ENCODE measurements at regions of chr1 and their contacts with region 1.

Region 1: DNA sequence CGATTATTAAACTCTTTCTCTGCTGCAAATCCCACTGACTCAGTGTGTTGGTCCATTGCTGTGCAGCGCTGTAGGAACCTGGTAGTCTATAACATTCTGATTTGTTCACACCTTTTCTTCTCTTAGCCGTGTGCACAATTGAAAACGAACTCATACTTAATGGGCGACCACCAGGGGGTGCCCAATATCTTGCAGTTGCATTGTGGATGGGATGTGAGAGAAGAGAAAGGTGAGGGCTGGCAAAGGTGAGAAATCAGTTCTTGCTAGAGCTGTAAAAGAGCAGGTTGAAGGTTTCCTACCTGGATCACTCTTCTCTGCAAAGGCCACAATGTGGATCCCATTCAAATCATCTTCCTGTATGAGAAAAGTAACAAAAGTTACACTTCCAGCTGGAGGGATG is 51.0 kb downstream of the CASQ2 start:
- DNase-seq: peak in 3 of 4 experiments; percentile 29 to 62 (median 29)
- ATAC-seq: peak; percentile 74
- H3K4me3 ChIP-seq: no peak overlapping the region
- H3K27ac ChIP-seq: no peak overlapping the region
- H3K4me1 ChIP-seq: no peaks in the 10 kb centered on the region
- H3K27me3 ChIP-seq: peaks cover 32 to 39% of the 10 kb centered on the region in 2 experiments
- CTCF ChIP-seq: peak; percentile 59; a peak in 5 of 6 replicates
- EP300 ChIP-seq: no peak
- POLR2A ChIP-seq: no peak
- RAD21 ChIP-seq: peak; percentile 45 to 73

Region 2: GRCh38 chr1:115764541-115764940 is 47.0 kb after region 1 on chr1:
- CTCF ChIA-PET with region 1: no interaction called
- POLR2A ChIA-PET with region 1: no interaction called
- in situ Hi-C with region 1: no loop called
- intact Hi-C with region 1: loop called (anchors 2 kb)
- DNase-seq: peak; percentile 24 to 44 (median 29)
- ATAC-seq: peak; percentile 76
- H3K4me3 ChIP-seq: no peak overlapping the region
- H3K27ac ChIP-seq: no peak overlapping the region
- H3K4me1 ChIP-seq: no peaks in the 10 kb centered on the region
- H3K27me3 ChIP-seq: peaks cover 5 to 17% of the 10 kb centered on the region in 2 experiments; a peak in 4 of 5 replicates
- CTCF ChIP-seq: peak; percentile 34 to 57 (median 35); a peak in 4 of 6 replicates
- EP300 ChIP-seq: no peak
- POLR2A ChIP-seq: no peak
- RAD21 ChIP-seq: peak; percentile 68 to 83

Region 3: DNA sequence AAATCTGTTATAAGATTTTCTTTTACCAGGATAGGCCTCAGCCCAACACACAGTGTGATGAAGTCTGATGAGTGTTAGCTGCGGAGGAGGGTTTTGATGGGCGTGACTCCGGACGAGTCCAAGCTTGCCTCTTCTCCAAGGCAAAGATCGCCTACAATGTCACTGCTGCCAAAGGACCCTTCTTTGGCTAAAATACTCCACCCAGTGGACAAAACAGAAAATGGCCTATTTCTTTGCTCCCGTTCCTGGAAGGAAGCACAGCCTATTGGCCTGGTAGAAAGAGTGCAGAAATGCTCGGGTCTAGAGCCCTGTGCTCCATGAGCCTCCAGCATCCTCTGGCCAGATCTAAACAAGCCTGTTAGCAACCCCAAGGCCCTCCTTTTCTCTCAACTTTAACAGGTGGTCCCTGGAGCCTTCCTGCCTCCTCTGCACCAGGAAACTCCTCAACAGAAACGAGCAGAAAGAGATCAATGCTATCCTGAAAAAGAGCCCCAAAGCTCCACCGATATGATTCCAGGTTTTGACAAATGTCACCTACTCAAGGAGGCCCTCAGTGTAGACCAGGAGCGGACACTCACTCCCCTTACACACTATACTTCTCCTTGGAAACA is 54.4 kb after region 1 on chr1:
- CTCF ChIA-PET with region 1: no interaction called
- POLR2A ChIA-PET with region 1: no interaction called
- in situ Hi-C with region 1: no loop called
- intact Hi-C with region 1: loop called (anchors 2 kb)
- DNase-seq: peak; percentile 66 to 78 (median 70)
- ATAC-seq: peak; percentile 97
- H3K4me3 ChIP-seq: no peak overlapping the region
- H3K27ac ChIP-seq: no peak overlapping the region
- H3K4me1 ChIP-seq: no peaks in the 10 kb centered on the region
- H3K27me3 ChIP-seq: peaks cover 7 to 16% of the 10 kb centered on the region in 2 experiments; a peak in 4 of 5 replicates
- CTCF ChIP-seq: peak; percentile 82 to 92 (median 84)
- EP300 ChIP-seq: no peak
- POLR2A ChIP-seq: no peak
- RAD21 ChIP-seq: peak; percentile 94 to 97

Region 4: DNA sequence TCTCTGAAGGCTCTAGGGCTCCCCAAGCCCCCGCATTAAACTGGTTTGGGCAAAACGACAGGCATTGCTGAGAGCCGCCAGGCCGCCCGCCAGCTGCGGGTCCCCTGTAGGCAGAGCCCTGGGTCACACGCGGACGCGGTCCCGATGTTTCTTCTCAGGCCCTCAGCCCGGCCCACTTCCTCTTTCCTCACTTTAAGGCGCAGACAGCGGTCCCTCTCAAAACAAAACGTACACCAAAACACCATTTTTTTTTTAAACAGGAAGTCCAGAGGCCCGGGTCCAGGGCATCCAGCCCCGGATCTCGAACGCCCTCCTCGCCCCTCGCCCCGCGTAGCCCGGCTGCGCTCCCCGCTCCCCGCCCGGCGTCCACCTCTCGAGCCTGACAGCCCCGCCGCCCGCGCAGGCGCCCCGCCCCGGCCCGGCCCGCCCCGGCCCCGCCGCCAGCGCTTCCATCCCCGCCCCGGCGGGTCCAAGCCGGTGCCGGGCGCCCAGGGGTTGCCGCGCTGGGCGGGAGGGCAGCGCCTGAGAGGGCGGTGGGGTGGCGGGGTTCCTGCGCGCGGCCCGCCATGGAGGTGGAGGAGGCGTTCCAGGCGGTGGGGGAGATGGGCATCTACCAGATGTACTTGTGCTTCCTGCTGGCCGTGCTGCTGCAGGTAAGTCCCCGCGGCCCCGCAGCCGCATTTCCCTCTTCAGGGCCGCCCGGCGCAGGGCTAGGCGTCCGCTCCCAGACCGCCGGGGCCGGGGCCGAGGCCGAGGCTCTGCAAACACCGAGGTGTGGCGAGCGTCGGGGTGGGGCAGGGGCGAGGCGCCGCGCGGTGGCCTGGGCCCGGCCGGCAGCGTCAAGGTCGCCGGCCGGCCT is 258.8 kb after region 1 on chr1 and contains the start of gene SLC22A15:
- CTCF ChIA-PET with region 1: no interaction called
- POLR2A ChIA-PET with region 1: no interaction called
- in situ Hi-C with region 1: loop called (anchors 10 kb)
- intact Hi-C with region 1: loop called (anchors 1 kb)
- DNase-seq: peak; percentile 36 to 70 (median 46)
- ATAC-seq: peak; percentile 85
- H3K4me3 ChIP-seq: peak within 1 kb of the TSS; percentile 41
- H3K27ac ChIP-seq: no peak within 1 kb of the TSS
- H3K4me1 ChIP-seq: peaks cover 0 to 12% of the 10 kb centered on the region in 2 experiments; a peak in 2 of 5 replicates
- H3K27me3 ChIP-seq: peaks cover 12 to 18% of the 10 kb centered on the region in 2 experiments; a peak in 4 of 5 replicates
- CTCF ChIP-seq: no peak
- EP300 ChIP-seq: no peak
- POLR2A ChIP-seq: no peak
- RAD21 ChIP-seq: 0 out of 4 replicates have a peak, but pooled peaks of 1 of the 2 experiments have one; percentile 3
- polyA plus RNA-seq, gene SLC22A15: 0.35 to 0.52 TPM

Region 5: GRCh38 chr1:115980998-115981993 is 263.8 kb after region 1 on chr1:
- CTCF ChIA-PET with region 1: no interaction called
- POLR2A ChIA-PET with region 1: no interaction called
- in situ Hi-C with region 1: loop called (anchors 10 kb)
- intact Hi-C with region 1: loop called (anchors 1 kb)
- DNase-seq: peak; percentile 58 to 73 (median 67)
- ATAC-seq: peak; percentile 84
- H3K4me3 ChIP-seq: no peak overlapping the region
- H3K27ac ChIP-seq: no peak overlapping the region
- H3K4me1 ChIP-seq: peaks cover 0 to 6% of the 10 kb centered on the region in 2 experiments; a peak in 2 of 5 replicates
- H3K27me3 ChIP-seq: peaks cover 8 to 12% of the 10 kb centered on the region in 2 experiments; a peak in 4 of 5 replicates
- CTCF ChIP-seq: peak; percentile 80 to 91 (median 81)
- EP300 ChIP-seq: no peak
- POLR2A ChIP-seq: no peak
- RAD21 ChIP-seq: peak; percentile 89